PC-3 (cell line): ENCODE measurements at regions of chr11 and their contacts with region 1.

Region 1: DNA sequence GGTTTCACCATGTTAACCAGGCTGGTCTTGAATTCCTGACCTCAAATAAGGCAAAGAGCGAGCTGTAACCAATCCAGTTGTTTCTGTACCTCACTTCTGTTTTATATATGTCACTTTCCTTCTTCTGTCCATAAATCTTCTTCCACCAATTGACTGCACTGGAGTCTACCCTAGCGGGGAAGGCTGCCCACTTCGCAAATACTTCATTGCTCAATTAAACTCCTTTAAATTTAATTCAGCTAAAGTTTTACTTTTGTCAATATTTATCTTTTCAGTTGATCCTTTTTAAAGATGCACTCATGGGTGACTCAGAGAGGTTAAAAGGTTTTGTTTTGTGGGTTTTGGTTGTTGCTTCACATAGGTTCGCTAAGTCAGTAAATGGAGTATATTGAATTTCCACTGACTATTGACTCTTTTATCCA is 597.2 kb downstream of the DLG2 start:
- DNase-seq: peak; percentile 97
- ATAC-seq: peak; percentile 93
- H3K4me3 ChIP-seq: 0 out of 2 replicates have a peak overlapping the region, but pooled peaks have one; percentile 11
- H3K27ac ChIP-seq: peak overlapping the region; percentile 45
- H3K4me1 ChIP-seq: peaks cover 13% of the 10 kb centered on the region
- H3K27me3 ChIP-seq: 0 out of 2 replicates have a peak, but pooled peaks cover 2% of the 10 kb centered on the region
- CTCF ChIP-seq: no peak

Region 2: DNA sequence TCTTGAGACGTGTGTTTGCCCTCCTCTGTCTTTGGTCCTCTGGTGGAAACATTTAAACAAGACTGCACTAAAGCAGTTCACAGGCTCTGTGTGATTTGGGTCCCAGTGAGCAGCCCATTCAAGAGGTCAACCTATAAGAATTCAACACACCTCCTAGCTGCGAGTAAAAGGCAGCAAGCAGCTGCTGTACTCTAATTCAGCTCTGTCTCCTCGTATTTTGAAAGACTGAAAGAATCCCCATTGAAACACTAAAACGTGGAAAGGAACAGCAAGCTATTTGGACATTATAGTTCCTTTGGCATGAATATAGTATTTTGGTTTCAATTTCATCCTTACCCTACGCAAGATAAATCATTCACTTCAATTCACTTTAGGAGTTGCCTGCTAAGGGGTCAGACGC is 449.5 kb before region 1 on chr11:
- CTCF ChIA-PET with region 1: no interaction called
- POLR2A ChIA-PET with region 1: no interaction called
- intact Hi-C with region 1: no loop called
- DNase-seq: no peak
- ATAC-seq: no peak
- H3K4me3 ChIP-seq: peak overlapping the region; percentile 2; the same call in 1 of the 2 replicates
- H3K27ac ChIP-seq: no peak overlapping the region
- H3K4me1 ChIP-seq: no peaks in the 10 kb centered on the region
- H3K27me3 ChIP-seq: no peaks in the 10 kb centered on the region
- CTCF ChIP-seq: no peak

Region 3: GRCh38 chr11:84800755-84801346 is 229.1 kb before region 1 on chr11:
- CTCF ChIA-PET with region 1: no interaction called
- POLR2A ChIA-PET with region 1: no interaction called
- intact Hi-C with region 1: loop called (anchors 5 kb)
- DNase-seq: peak; percentile 83
- ATAC-seq: peak; percentile 62
- H3K4me3 ChIP-seq: no peak overlapping the region
- H3K27ac ChIP-seq: no peak overlapping the region
- H3K4me1 ChIP-seq: peaks cover 12% of the 10 kb centered on the region
- H3K27me3 ChIP-seq: 0 out of 2 replicates have a peak, but pooled peaks cover 6% of the 10 kb centered on the region
- CTCF ChIP-seq: peak; percentile 88

Region 4: DNA sequence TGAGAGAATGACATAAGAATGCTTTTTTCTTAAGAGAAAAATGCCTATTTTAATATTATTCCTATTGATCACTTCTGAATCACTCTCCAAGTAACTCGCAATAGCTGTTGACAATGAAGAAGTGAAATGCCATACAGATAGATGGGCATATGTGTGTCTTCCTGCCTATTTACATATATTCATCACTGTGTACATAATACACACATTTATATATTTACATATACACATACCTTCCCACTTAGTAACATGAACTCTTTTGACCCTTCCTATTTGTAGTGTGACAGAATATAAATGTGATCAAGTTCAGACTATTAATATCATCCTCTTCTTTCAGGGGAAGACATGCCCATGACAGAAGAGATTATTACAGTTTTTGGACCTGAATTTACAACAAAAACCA is 159.4 kb before region 1 on chr11:
- CTCF ChIA-PET with region 1: no interaction called
- POLR2A ChIA-PET with region 1: no interaction called
- intact Hi-C with region 1: loop called (anchors 1 kb)
- DNase-seq: peak; percentile 94
- ATAC-seq: peak; percentile 79
- H3K4me3 ChIP-seq: peak overlapping the region; percentile 19; the same call in 1 of the 2 replicates
- H3K27ac ChIP-seq: peak overlapping the region; percentile 89
- H3K4me1 ChIP-seq: peaks cover 69% of the 10 kb centered on the region
- H3K27me3 ChIP-seq: no peaks in the 10 kb centered on the region
- CTCF ChIP-seq: no peak

Region 5: GRCh38 chr11:84969103-84969502 is 60.8 kb before region 1 on chr11:
- CTCF ChIA-PET with region 1: no interaction called
- POLR2A ChIA-PET with region 1: no interaction called
- intact Hi-C with region 1: no loop called
- DNase-seq: no peak
- ATAC-seq: no peak
- H3K4me3 ChIP-seq: no peak overlapping the region
- H3K27ac ChIP-seq: no peak overlapping the region
- H3K4me1 ChIP-seq: no peaks in the 10 kb centered on the region
- H3K27me3 ChIP-seq: peaks cover 15% of the 10 kb centered on the region; the same call in 1 of the 2 replicates
- CTCF ChIP-seq: no peak

Region 6: GRCh38 chr11:84993386-84993785 is 36.5 kb before region 1 on chr11:
- CTCF ChIA-PET with region 1: no interaction called
- POLR2A ChIA-PET with region 1: no interaction called
- intact Hi-C with region 1: loop called (anchors 1 kb)
- DNase-seq: peak; percentile 63
- ATAC-seq: peak; percentile 76
- H3K4me3 ChIP-seq: no peak overlapping the region
- H3K27ac ChIP-seq: no peak overlapping the region
- H3K4me1 ChIP-seq: no peaks in the 10 kb centered on the region
- H3K27me3 ChIP-seq: no peaks in the 10 kb centered on the region
- CTCF ChIP-seq: peak; percentile 88

Region 7: GRCh38 chr11:85045716-85046115 is 15.8 kb after region 1 on chr11:
- CTCF ChIA-PET with region 1: no interaction called
- POLR2A ChIA-PET with region 1: no interaction called
- intact Hi-C with region 1: loop called (anchors 2 kb)
- DNase-seq: no peak
- ATAC-seq: no peak
- H3K4me3 ChIP-seq: no peak overlapping the region
- H3K27ac ChIP-seq: no peak overlapping the region
- H3K4me1 ChIP-seq: no peaks in the 10 kb centered on the region
- H3K27me3 ChIP-seq: peaks cover 37% of the 10 kb centered on the region
- CTCF ChIP-seq: no peak

Region 8: GRCh38 chr11:85094795-85095194 is 64.9 kb after region 1 on chr11:
- CTCF ChIA-PET with region 1: no interaction called
- POLR2A ChIA-PET with region 1: no interaction called
- intact Hi-C with region 1: loop called (anchors 2 kb)
- DNase-seq: no peak
- ATAC-seq: peak; percentile 12; the same call in 1 of the 2 replicates
- H3K4me3 ChIP-seq: no peak overlapping the region
- H3K27ac ChIP-seq: no peak overlapping the region
- H3K4me1 ChIP-seq: peaks cover 9% of the 10 kb centered on the region; the same call in 1 of the 2 replicates
- H3K27me3 ChIP-seq: no peaks in the 10 kb centered on the region
- CTCF ChIP-seq: no peak